ENCODE measurements at regions of chr5 and their contacts with region 1.

Region 1: DNA sequence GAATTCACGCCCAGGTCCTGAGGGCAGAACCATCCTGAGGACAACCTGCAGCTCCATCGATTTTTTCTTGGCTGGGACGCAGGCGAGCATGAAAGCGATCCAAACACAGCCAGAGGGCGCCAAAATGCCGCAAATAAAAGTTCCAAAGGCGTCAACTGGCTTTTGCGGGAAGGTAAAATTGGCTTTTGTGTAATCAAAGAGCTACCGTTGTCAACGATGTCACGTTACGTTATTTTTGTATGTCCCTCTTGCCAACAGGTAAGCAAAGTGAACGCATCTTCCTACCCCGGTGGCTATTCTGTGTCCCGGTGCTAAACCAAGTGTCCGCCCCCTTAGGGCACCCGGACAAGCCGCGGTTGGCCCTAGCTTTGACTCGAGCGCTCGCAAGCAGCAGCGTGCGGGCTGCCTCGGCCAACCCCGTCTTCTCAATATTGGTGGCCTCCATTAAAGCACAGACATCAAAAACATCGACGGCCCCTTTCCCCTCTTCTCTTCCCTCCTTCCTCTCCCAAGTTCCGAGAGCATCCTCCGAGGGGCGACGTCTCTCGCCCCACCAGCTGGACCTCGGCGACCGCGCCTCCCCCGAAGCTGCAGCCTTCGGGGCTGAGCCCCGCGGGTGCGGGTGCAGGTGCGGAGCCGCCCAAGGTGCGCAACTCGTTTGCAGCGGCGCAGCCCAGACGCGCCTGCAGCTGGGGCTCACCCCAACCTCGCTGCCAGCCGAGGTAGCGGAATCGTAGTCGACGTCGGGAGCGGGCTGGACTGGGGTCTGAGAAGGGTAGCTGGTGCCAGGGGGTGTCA is 1.1 kb upstream of the BASP1 start:
- DNase-seq: peak; percentile 44 to 91 (median 77)
- H3K4me3 ChIP-seq: peak overlapping the region in 1 of 4 donors; percentile 64
- H3K27ac ChIP-seq: no peak overlapping the region
- H3K4me1 ChIP-seq: peaks cover 0 to 4% of the 10 kb centered on the region in 2 donors
- H3K27me3 ChIP-seq: no peaks in the 10 kb centered on the region
- CTCF ChIP-seq: peak; percentile 53 to 84 (median 72)
- POLR2A ChIP-seq: no peak

Region 2: DNA sequence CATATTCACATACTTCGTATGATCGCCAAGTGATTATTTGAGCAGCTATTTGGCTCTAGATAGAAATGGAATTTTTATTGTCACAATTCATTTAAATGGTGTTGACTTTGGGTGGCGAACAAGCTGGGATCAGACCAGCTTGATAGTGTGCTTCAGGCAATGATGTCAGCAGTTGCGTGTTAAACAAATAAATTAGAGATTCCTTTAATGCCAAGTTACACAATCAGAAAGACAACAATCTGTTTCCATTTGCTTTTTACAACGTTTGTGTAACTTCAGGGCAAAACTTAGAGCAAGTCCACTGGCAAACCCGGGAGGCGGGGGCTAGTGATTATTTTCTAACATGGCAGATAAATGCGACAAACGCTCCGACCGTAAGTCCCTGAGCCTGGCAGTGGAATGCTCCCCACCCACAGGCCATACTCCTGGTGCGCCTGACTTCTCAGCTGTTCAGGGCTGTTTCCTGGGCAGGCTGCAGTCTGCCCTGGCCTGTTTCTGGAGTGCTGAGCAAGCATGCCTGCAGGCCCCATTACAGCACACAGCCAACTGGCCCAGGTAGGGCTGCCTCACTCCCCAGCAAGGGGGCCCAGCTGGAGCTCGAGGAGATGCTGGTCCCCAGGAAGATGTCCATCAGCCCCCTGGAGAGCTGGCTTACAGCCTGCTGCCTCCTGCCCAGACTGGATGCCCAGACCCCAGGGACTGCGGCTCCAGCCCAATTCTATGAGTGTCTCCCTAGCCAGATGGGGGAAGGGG is 89.8 kb after region 1 on chr5:
- intact Hi-C with region 1: no loop called
- DNase-seq: peak in 5 of 7 donors; percentile 9 to 65 (median 32)
- H3K4me3 ChIP-seq: no peak overlapping the region
- H3K27ac ChIP-seq: peak overlapping the region in 1 of 5 donors; percentile 46
- H3K4me1 ChIP-seq: no peaks in the 10 kb centered on the region
- H3K27me3 ChIP-seq: no peaks in the 10 kb centered on the region
- CTCF ChIP-seq: no peak
- POLR2A ChIP-seq: no peak

Region 3: GRCh38 chr5:17709011-17709705 is 492.8 kb after region 1 on chr5:
- intact Hi-C with region 1: no loop called
- DNase-seq: no peak
- H3K4me3 ChIP-seq: no peak overlapping the region
- H3K27ac ChIP-seq: no peak overlapping the region
- H3K4me1 ChIP-seq: no peaks in the 10 kb centered on the region
- H3K27me3 ChIP-seq: no peaks in the 10 kb centered on the region
- CTCF ChIP-seq: no peak
- POLR2A ChIP-seq: no peak

Region 4: DNA sequence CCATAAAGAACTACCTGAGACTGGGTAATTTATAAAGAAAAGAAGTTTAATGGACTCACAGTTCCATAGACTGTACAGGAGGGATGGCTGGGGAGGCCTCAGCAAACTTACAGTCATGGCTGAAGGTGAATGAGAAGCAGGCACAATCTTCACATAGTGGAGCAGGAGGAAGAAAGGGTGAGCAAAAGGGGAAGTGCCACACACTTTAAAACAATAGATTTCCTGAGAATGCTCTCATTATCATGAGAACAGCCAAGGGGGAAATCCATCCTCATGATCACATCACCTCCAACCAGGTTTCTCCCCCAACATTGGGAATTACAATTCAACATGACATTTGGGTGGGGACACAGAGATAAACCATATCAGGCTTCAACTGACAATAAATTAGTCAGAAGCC is 1082.8 kb after region 1 on chr5:
- intact Hi-C with region 1: loop called in 1 of 2 experiments (anchors 5 kb)
- DNase-seq: no peak
- H3K4me3 ChIP-seq: no peak overlapping the region
- H3K27ac ChIP-seq: no peak overlapping the region
- H3K4me1 ChIP-seq: no peaks in the 10 kb centered on the region
- H3K27me3 ChIP-seq: no peaks in the 10 kb centered on the region
- CTCF ChIP-seq: no peak
- POLR2A ChIP-seq: no peak

Region 5: DNA sequence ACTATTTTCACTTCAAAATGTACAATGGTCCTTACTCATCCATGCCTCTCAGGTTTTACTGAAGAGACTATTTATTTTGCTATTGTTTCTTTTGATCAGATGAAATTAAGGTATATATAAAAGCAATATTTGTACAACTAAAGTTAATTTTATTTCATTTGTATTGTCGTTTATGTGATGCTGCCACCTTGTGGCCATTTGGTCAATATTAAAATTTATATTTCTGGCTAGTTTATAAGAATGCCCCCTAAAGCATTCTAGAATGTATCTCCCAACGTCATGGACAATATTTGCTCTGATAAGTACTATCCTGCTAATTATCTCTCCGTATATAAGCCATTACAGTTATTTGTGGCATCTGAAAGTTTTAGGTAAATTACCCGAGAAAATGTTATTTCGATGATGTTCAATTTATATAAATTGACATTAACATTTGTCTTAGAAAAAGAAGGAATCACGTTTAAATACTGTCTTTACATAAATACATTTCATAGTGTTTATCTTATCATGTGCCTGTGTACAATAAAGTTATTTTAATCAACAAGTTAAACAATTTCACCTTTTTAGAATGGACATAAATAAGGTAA is 1097.9 kb after region 1 on chr5:
- intact Hi-C with region 1: loop called (anchors 5 to 10 kb)
- DNase-seq: peak in 3 of 7 donors; percentile 9 to 24 (median 16)
- H3K4me3 ChIP-seq: no peak overlapping the region
- H3K27ac ChIP-seq: no peak overlapping the region
- H3K4me1 ChIP-seq: no peaks in the 10 kb centered on the region
- H3K27me3 ChIP-seq: no peaks in the 10 kb centered on the region
- CTCF ChIP-seq: peak in 5 of 6 experiments; percentile 20 to 66 (median 52)
- POLR2A ChIP-seq: no peak

Measured in adrenal gland (tissue), 19 donors.